ENCODE measurements at regions of chr9 and their contacts with region 1.

Region 1: GRCh38 chr9:122099271-122099869 is 6.3 kb upstream of the TTLL11 start:
- DNase-seq: peak; percentile 64 to 87 (median 80)
- ATAC-seq: peak; percentile 84
- H3K4me3 ChIP-seq: no peak overlapping the region
- H3K4me3 Mint-ChIP-seq: peak overlapping the region; percentile 35
- H3K27ac ChIP-seq: no peak overlapping the region
- H3K27ac Mint-ChIP-seq: no peak overlapping the region
- H3K4me1 ChIP-seq: peaks cover 5% of the 10 kb centered on the region
- H3K4me1 Mint-ChIP-seq: peaks cover 14% of the 10 kb centered on the region
- H3K27me3 ChIP-seq: no peaks in the 10 kb centered on the region
- H3K27me3 Mint-ChIP-seq: no peaks in the 10 kb centered on the region
- CTCF ChIP-seq: peak; percentile 90

Region 2: DNA sequence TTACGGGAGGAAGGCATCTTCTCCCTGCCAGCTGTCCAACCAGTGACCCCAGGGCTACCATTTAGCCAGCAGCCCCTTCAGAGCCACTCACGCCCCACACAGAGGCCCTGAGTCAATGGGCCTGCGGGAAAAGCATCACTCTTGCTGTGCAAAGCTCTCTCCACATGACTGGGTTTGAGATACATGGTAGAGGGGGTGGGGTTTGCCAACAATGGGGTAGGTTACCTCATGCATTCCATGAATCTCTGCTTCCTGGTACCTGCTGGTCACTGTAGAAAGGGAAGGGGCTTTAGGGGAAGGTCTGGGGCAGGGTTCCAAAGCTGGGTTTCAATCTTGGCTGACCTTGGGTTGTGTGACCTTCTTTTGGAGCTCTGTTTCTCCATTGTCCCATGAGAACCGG is 16.7 kb after region 1 on chr9:
- CTCF ChIA-PET with region 1: interaction called, 177 read pairs
- POLR2A ChIA-PET with region 1: no interaction called
- intact Hi-C with region 1: no loop called
- DNase-seq: no peak
- ATAC-seq: no peak
- H3K4me3 ChIP-seq: no peak overlapping the region
- H3K4me3 Mint-ChIP-seq: no peak overlapping the region
- H3K27ac ChIP-seq: no peak overlapping the region
- H3K27ac Mint-ChIP-seq: no peak overlapping the region
- H3K4me1 ChIP-seq: no peaks in the 10 kb centered on the region
- H3K4me1 Mint-ChIP-seq: no peaks in the 10 kb centered on the region
- H3K27me3 ChIP-seq: no peaks in the 10 kb centered on the region
- H3K27me3 Mint-ChIP-seq: no peaks in the 10 kb centered on the region
- CTCF ChIP-seq: no peak

Region 3: DNA sequence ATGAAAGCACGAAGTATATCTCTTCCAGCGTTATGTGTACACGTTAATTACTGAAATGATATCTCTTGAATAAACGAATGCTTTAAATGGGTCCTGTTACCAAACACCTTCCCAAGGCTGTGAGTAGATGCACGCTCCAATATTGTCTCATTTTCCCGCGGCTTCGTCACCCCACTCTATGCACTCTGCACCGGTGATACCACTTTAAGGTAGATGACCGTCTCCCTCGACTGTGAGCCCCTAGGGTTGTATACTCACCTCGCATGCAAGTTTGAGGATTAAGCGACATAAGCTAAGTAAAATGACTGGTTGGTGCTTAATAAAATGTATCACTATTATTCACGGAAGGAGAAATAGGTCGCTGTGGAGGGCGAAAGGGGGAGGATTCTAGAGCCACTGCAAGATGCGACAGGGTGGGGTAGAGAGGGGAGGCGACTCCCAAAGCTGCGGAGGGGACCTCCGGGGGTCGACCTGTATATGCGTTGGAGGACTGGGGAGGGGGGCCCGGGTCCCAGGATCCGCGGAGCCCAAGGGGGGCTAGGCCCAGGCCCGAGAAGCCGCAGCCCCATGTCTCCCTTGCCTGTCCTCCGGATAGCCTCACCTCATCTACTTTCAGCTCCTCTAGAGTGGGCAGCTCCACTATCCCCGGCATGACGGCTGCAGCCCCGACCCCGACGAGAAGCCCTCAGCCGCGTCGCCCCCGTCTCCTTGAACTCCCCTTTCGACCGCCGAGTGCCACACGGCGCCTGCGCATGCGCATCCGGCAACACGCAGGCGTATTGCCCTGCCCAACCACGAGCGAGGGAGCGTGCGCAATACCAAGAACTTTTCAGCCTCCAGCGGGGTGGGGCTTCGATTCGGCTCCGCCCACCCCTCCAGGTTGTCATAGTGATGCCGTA is 59.9 kb after region 1 on chr9 and contains the starts of genes MORN5 and NDUFA8:
- CTCF ChIA-PET with region 1: interaction called, 13 read pairs
- POLR2A ChIA-PET with region 1: no interaction called
- intact Hi-C with region 1: no loop called
- DNase-seq: peak; percentile 90 to 98 (median 96)
- ATAC-seq: peak; percentile 96
- H3K4me3 ChIP-seq: peak within 1 kb of the TSS; percentile 68 to 99
- H3K4me3 Mint-ChIP-seq: peak within 1 kb of the TSS; percentile 99
- H3K27ac ChIP-seq: peak within 1 kb of the TSS; percentile 74 to 86
- H3K27ac Mint-ChIP-seq: peak within 1 kb of the TSS; percentile 98
- H3K4me1 ChIP-seq: peaks cover 27% of the 10 kb centered on the region
- H3K4me1 Mint-ChIP-seq: peaks cover 42% of the 10 kb centered on the region
- H3K27me3 ChIP-seq: no peaks in the 10 kb centered on the region
- H3K27me3 Mint-ChIP-seq: peaks cover 14% of the 10 kb centered on the region
- CTCF ChIP-seq: no peak
- total RNA-seq, gene MORN5: not detected
- total RNA-seq, gene NDUFA8: 5.7 to 7.0 TPM

Region 4: DNA sequence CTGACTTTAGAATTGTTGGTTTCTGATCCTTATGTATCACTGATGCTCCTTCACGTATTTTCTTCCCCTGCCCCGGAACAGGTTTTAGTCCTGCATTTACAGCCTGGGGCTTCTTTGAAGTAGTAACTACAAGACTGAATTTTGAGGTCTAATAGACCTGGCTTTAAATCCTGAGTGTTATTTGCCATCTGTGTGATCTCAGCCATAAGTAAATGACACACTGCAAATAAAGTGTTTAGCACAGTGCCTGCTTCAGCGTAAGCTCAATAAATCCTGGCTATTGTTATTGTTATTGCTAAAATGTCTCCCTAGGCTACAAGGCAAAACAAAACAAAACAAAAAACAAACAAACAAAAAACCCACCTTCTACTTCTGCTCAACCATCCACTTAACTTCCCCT is 145.0 kb after region 1 on chr9:
- CTCF ChIA-PET with region 1: no interaction called
- POLR2A ChIA-PET with region 1: no interaction called
- intact Hi-C with region 1: no loop called
- DNase-seq: no peak
- ATAC-seq: no peak
- H3K4me3 ChIP-seq: no peak overlapping the region
- H3K4me3 Mint-ChIP-seq: no peak overlapping the region
- H3K27ac ChIP-seq: no peak overlapping the region
- H3K27ac Mint-ChIP-seq: no peak overlapping the region
- H3K4me1 ChIP-seq: no peaks in the 10 kb centered on the region
- H3K4me1 Mint-ChIP-seq: no peaks in the 10 kb centered on the region
- H3K27me3 ChIP-seq: no peaks in the 10 kb centered on the region
- H3K27me3 Mint-ChIP-seq: no peaks in the 10 kb centered on the region
- CTCF ChIP-seq: no peak

Region 5: DNA sequence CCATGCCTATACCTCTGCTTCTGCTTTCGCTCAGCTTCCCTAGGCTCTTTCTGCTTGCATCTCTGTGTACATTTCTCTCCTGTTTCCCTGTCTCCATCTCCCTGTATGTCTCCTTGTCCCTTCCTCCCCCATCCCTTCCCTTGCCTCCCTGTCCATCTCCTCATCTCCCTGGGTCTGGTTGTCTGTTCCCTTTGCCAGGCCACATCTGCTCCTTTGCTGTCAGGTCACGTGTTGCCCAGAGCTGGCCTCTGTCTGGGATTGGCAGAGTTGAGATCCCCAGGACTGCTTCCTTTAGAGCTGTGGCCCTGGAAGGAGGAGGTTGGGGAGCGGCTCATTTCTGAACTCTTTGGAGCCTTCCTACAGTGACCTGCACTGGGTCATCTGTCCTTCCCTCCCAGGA is 239.6 kb after region 1 on chr9:
- CTCF ChIA-PET with region 1: interaction called, 144 read pairs
- POLR2A ChIA-PET with region 1: no interaction called
- intact Hi-C with region 1: no loop called
- DNase-seq: no peak
- ATAC-seq: no peak
- H3K4me3 ChIP-seq: no peak overlapping the region
- H3K4me3 Mint-ChIP-seq: no peak overlapping the region
- H3K27ac ChIP-seq: no peak overlapping the region
- H3K27ac Mint-ChIP-seq: no peak overlapping the region
- H3K4me1 ChIP-seq: no peaks in the 10 kb centered on the region
- H3K4me1 Mint-ChIP-seq: no peaks in the 10 kb centered on the region
- H3K27me3 ChIP-seq: no peaks in the 10 kb centered on the region
- H3K27me3 Mint-ChIP-seq: peaks cover 2% of the 10 kb centered on the region
- CTCF ChIP-seq: no peak

Region 6: GRCh38 chr9:122356627-122357026 is 257.3 kb after region 1 on chr9:
- CTCF ChIA-PET with region 1: interaction called, 144 read pairs
- POLR2A ChIA-PET with region 1: no interaction called
- intact Hi-C with region 1: no loop called
- DNase-seq: no peak
- ATAC-seq: no peak
- H3K4me3 ChIP-seq: no peak overlapping the region
- H3K4me3 Mint-ChIP-seq: no peak overlapping the region
- H3K27ac ChIP-seq: no peak overlapping the region
- H3K27ac Mint-ChIP-seq: no peak overlapping the region
- H3K4me1 ChIP-seq: no peaks in the 10 kb centered on the region
- H3K4me1 Mint-ChIP-seq: no peaks in the 10 kb centered on the region
- H3K27me3 ChIP-seq: peaks cover 0 to 3% of the 10 kb centered on the region in 2 experiments
- H3K27me3 Mint-ChIP-seq: no peaks in the 10 kb centered on the region
- CTCF ChIP-seq: no peak

Region 7: DNA sequence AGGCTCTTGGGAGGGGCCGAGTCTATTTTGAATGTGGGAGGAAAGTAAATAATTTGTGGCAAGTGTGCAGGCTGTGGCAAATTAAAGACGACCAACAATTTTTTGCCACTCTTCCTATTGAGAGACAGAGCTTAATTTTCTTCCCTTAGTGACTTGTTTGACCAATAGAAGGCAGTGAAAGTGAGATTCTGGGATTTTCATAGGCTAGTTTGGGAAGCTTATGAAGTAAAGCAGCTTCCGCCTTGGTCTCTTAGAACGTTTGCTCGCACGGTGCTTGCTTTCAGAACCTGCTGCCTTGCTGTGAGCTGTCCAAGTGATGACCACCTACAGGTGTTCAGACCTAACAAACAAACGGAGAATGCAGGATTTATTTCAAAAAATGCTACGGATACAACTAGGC is 446.8 kb after region 1 on chr9:
- CTCF ChIA-PET with region 1: no interaction called
- POLR2A ChIA-PET with region 1: no interaction called
- intact Hi-C with region 1: no loop called
- DNase-seq: no peak
- ATAC-seq: no peak
- H3K4me3 ChIP-seq: no peak overlapping the region
- H3K4me3 Mint-ChIP-seq: no peak overlapping the region
- H3K27ac ChIP-seq: no peak overlapping the region
- H3K27ac Mint-ChIP-seq: no peak overlapping the region
- H3K4me1 ChIP-seq: no peaks in the 10 kb centered on the region
- H3K4me1 Mint-ChIP-seq: no peaks in the 10 kb centered on the region
- H3K27me3 ChIP-seq: peaks cover 0 to 6% of the 10 kb centered on the region in 2 experiments
- H3K27me3 Mint-ChIP-seq: peaks cover 13% of the 10 kb centered on the region
- CTCF ChIP-seq: no peak